GM13977 (cell line): ENCODE measurements at regions of chr16 and their contacts with region 1.

Region 1: GRCh38 chr16:84504420-84505248 is at the start of gene MEAK7:
- DNase-seq: peak; percentile 97
- CTCF ChIP-seq: peak; percentile 12

Region 2: DNA sequence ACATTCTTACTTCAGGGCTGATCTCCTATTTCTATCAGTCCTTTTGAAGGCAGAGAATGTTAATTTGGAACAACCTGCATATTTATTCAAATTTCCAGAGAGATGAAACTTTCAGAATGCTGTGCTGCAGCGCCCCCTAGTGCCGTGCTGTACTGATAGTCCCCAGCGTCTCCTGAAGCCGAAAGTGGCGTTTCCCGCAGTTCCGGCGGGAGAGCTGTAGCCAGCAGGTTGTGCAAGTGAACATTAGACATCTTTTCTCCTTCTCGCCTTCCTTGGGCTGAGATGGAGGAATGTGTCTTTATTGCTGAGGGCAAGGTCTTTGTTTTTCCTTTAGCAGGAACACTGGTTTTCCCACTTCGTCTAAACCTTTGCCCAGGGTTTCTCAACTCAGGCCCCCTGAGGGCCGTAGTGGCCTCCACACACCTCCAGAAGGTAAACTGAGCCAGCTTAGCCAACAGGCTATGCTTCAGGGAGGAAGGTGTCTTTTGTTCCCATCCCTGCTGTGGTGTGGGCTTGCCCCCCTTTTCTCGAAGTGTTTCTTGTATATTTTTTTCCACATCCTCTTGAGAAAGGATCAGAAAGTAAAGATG is 221.5 kb after region 1 on chr16:
- in situ Hi-C with region 1: loop called (anchors 5 kb)
- DNase-seq: peak; percentile 39
- CTCF ChIP-seq: peak; percentile 90